ENCODE measurements at regions of chr5 and their contacts with region 1.

Region 1: DNA sequence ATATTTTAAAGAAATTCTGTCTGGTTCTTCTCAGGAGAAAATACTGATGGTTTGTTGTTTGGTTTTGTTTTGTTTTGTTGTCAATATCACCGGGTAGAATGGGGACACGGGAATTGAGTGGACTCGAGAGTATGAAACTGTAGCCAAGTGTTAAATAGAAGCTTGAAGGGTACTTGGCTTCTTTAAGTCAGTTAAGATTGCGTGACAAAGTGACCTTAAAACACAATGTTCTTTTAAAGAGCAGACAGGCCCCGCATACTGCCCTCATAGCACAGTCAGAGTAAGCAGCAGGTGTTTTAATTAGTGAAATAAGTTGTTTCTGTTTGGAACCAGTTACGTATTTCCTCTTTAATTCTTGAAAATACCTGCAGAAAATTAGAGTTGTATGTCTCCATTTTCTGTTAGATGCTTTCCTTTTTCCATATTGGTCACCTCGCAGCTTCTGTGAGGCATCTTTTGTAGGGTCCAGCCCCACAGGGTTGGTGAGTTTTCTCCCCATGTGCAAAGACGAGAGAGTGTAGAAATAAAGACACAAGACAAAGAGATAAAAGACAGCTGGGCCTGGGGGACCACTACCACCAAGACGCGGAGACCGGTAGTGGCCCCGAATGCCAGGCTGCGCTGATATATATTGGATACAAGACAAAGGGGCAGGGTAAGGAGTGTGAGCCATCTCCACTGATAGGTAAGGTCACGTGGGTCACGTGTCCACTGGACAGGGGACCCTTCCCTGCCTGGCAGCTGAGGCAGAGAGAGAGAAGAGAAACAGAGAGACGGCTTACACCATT is 9.6 kb downstream of the TRIP13 start:
- DNase-seq: peak in 1 of 2 donors; percentile 34
- H3K4me3 ChIP-seq: no peak overlapping the region
- CTCF ChIP-seq: no peak
- POLR2A ChIP-seq: no peak

Region 2: DNA sequence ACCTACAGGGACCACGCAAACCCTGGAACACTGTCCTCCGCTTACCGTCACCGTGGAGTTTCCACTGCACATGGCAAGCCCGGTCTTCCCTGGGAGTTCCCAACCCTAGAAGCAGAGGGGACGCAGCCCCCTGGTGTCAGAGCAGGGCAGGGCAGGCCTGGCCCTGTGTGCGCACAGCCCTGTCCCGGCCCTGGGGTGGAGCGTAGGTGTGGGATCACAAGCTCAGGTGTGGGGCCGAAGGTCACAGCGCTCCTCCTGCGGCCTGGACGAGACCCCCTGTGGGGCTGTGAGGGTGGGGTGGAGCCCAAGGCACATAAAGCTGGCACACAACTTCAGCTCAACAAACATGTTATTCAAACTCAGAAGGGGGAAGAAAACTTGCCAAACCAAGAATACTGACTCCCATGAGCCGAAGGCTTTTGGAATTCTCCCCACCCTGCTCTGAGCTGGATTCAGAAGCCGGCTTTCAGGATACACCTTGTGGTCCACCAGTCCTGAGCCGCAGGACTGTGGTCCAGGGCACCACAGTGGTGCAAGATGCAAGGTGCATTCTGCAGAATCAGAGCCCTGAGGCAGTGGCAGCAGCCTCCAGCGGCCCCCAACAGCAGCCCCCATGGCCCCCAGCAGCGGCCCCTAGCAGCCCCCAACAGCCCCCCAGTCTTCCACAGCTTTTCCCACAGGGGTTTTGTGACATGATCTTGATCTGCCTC is 471.2 kb before region 1 on chr5:
- intact Hi-C with region 1: loop called (anchors 10 kb)
- DNase-seq: peak in 1 of 2 donors; percentile 88
- H3K4me3 ChIP-seq: no peak overlapping the region
- CTCF ChIP-seq: no peak
- POLR2A ChIP-seq: no peak

Region 3: GRCh38 chr5:671459-672328 is 230.6 kb before region 1 on chr5:
- intact Hi-C with region 1: loop called (anchors 5 kb)
- DNase-seq: peak; percentile 59 to 94
- H3K4me3 ChIP-seq: no peak overlapping the region
- CTCF ChIP-seq: peak in 1 of 3 donors; percentile 78
- POLR2A ChIP-seq: no peak